ENCODE measurements at regions of chr5 and their contacts with region 1.

Region 1: DNA sequence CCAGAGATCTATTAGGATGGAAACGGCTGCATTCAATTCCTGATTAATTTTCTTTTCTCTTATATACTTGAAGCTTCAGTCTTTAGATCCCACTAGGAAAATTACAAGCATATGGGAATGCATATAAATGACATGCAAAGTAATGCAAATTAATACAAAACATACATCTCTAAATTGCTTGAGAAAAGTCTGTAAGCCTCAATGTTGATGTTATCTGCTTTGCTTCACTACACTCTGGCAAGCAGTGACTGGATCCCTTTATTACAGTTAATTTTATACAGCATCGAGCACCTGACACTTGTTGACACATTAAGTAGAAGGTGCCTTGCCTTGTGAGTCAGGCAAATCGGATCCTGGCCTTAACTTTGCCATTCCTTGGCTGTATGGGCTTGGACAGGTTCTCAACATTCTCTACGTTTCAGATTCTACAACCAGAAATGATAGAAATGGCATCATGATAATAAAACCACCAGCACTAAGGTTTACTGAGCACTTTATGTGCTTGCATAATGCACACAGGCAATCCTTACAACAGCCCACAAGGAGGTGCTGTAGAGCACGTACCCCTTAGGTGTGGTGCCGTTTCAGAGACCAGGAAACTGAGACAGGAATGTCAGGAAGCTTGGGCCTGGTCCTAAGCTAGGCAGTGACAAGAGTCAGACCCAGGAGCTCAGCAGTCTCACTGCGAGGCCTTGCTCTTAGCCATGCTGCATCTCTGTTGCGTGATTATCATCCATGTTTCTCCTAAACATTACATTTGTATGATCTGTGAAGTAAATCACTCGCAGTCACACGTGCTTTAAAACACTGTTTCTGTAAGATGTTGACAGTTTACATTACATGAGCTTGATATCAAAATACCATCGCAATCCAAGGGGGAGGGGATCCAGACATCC is 2.7 kb downstream of the GCNT4 start:
- DNase-seq: peak; percentile 74
- H3K4me3 ChIP-seq: peak overlapping the region in 1 of 8 donors; percentile 94
- H3K27ac ChIP-seq: no peak overlapping the region
- H3K4me1 ChIP-seq: peaks cover 0 to 70% (median 53%) of the 10 kb centered on the region in 6 donors
- H3K27me3 ChIP-seq: peaks cover 0 to 43% (median 15%) of the 10 kb centered on the region in 7 donors
- CTCF ChIP-seq: peak; percentile 57 to 84 (median 75)
- POLR2A ChIP-seq: no peak

Region 2: GRCh38 chr5:74889523-74890105 is 160.1 kb before region 1 on chr5:
- intact Hi-C with region 1: no loop called
- DNase-seq: no peak
- H3K4me3 ChIP-seq: no peak overlapping the region
- H3K27ac ChIP-seq: no peak overlapping the region
- H3K4me1 ChIP-seq: no peaks in the 10 kb centered on the region
- H3K27me3 ChIP-seq: no peaks in the 10 kb centered on the region
- CTCF ChIP-seq: no peak
- POLR2A ChIP-seq: no peak

Region 3: DNA sequence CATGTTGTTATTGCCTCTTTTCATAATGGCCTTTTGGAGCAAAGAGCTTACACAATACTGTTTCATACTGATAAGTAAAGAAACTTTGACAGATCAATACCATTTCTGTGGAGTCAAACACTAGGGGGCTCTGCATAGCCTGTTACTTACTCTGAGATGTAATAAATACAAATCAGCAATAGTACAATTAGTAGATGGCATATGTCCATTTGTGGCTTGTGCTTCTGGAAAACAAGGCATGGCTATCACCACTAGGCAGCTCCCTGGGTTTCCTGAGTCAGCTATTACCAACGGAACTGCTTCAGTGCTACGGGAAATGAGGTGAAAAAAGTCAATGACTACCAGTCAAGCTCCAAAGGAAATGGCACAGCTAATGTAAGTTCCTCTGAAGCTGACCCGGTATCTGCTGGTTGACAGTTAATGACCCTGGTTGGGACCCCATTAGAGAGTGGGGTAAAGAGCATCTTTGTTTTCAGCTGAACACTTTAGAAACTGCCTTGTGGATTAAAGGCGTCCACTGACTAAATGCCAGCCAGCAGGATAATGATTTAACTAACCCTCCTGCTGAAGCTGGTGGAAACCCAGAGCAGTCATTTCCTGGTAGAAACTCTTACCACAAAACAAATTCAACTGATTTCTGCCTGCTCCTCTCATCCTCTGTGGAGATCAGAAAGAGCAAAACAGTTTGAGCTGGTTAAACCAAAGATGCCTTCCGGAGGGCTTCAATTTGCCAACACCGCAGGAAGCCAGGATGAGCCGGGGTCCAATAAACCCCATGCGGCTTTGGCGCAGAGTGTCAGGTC is 114.6 kb before region 1 on chr5:
- intact Hi-C with region 1: loop called (anchors 10 kb)
- DNase-seq: no peak
- H3K4me3 ChIP-seq: peak overlapping the region in 1 of 8 donors; percentile 1
- H3K27ac ChIP-seq: peak overlapping the region; percentile 9 to 73 (median 48)
- H3K4me1 ChIP-seq: peaks cover 5 to 22% (median 11%) of the 10 kb centered on the region in 6 donors
- H3K27me3 ChIP-seq: peaks cover 0 to 34% (median 0%) of the 10 kb centered on the region in 7 donors
- CTCF ChIP-seq: peak in 8 of 11 experiments; percentile 17 to 53 (median 42)
- POLR2A ChIP-seq: no peak